Activated T-helper 1 cell treated with anti-CD3 and anti-CD28 coated beads, Interleukin-12 subunit alpha, Interleukin-12 subunit beta, Interleukin-2, Interleukin-4 antibody, amounts not matched to agents 30 ng/mL and 10 ng/mL and 1 ng/mL, durations not matched to agents 14 hours and 24 hours and 36 hours (primary cell): ENCODE measurements at regions of chr4 and their contacts with region 1.

Region 1: GRCh38 chr4:123659730-123660129 is 263.1 kb downstream of the SPRY1 start:
- DNase-seq: no peak
- H3K4me3 Mint-ChIP-seq: no peak overlapping the region
- H3K27ac Mint-ChIP-seq: no peak overlapping the region
- H3K4me1 Mint-ChIP-seq: peaks cover 15% of the 10 kb centered on the region
- H3K27me3 Mint-ChIP-seq: peaks cover 24% of the 10 kb centered on the region

Region 2: GRCh38 chr4:123102897-123103471 is 556.7 kb before region 1 on chr4:
- intact Hi-C with region 1: loop called (anchors 1 kb)
- DNase-seq: no peak
- H3K4me3 Mint-ChIP-seq: no peak overlapping the region
- H3K27ac Mint-ChIP-seq: no peak overlapping the region
- H3K4me1 Mint-ChIP-seq: peaks cover 7% of the 10 kb centered on the region
- H3K27me3 Mint-ChIP-seq: no peaks in the 10 kb centered on the region

Region 3: GRCh38 chr4:123390846-123391456 is 268.8 kb before region 1 on chr4:
- intact Hi-C with region 1: loop called (anchors 1 kb)
- DNase-seq: no peak
- H3K4me3 Mint-ChIP-seq: no peak overlapping the region
- H3K27ac Mint-ChIP-seq: no peak overlapping the region
- H3K4me1 Mint-ChIP-seq: peaks cover 10% of the 10 kb centered on the region
- H3K27me3 Mint-ChIP-seq: peaks cover 23% of the 10 kb centered on the region

Region 4: DNA sequence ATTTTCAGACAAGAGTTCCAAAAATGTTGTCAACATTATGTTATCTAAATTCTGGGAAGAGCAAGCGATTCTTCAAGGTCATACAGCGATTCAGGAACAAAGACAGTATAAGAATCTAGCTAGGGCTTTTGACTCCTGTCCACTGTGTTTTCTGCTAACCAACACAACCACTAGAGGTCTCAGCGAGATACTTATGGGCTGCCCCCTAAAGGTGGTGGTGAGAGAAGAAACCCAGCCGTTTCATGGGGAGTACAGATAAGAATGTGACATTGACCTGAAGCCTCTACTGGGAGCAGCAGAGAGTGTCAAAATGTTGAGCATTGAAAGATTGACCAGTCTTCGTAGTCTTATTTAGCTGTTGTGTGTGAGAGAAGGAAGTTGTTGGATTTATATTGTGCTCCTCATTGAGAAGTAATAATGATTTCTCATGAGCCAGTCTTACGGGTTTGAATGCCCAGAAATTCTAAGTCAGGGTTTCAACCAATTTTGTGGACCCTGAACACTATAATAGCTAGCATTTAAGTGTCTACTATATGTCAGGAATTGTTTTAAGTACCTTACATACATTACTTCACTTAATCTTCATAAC is 94.9 kb before region 1 on chr4:
- intact Hi-C with region 1: loop called (anchors 2 kb)
- DNase-seq: peak; percentile 57
- H3K4me3 Mint-ChIP-seq: no peak overlapping the region
- H3K27ac Mint-ChIP-seq: no peak overlapping the region
- H3K4me1 Mint-ChIP-seq: peaks cover 7% of the 10 kb centered on the region
- H3K27me3 Mint-ChIP-seq: peaks cover 22% of the 10 kb centered on the region